ENCODE measurements at regions of chr16 and their contacts with region 1.

Region 1: GRCh38 chr16:31440516-31441184 is 1.9 kb downstream of the ZNF843 start:
- DNase-seq: peak; percentile 22
- H3K4me3 ChIP-seq: no peak overlapping the region
- H3K27ac ChIP-seq: no peak overlapping the region
- H3K4me1 ChIP-seq: no peaks in the 10 kb centered on the region
- H3K27me3 ChIP-seq: no peaks in the 10 kb centered on the region

Region 2: GRCh38 chr16:31202414-31203375 is 238.0 kb before region 1 on chr16 and contains the start of gene PYCARD:
- in situ Hi-C with region 1: loop called (anchors 10 kb)
- DNase-seq: peak; percentile 76
- H3K4me3 ChIP-seq: peak within 1 kb of the TSS; percentile 82
- H3K27ac ChIP-seq: no peak within 1 kb of the TSS
- H3K4me1 ChIP-seq: peaks cover 9% of the 10 kb centered on the region; the same call in 1 of the 2 replicates
- H3K27me3 ChIP-seq: no peaks in the 10 kb centered on the region
- total RNA-seq, gene PYCARD: 20.1 and 28.1 TPM in 2 replicates

Measured in GM23248 (cell line).